Prostate gland (tissue), 2 donors: ENCODE measurements at regions of chr2 and their contacts with region 1.

Region 1: GRCh38 chr2:1591978-1592907 is 152.1 kb downstream of the PXDN start:
- DNase-seq: peak; percentile 82
- H3K4me3 ChIP-seq: no peak overlapping the region
- H3K27ac ChIP-seq: no peak overlapping the region
- H3K4me1 ChIP-seq: peaks cover 2% of the 10 kb centered on the region
- H3K27me3 ChIP-seq: no peaks in the 10 kb centered on the region
- CTCF ChIP-seq: peak; percentile 54 to 91 (median 74)
- POLR2A ChIP-seq: no peak

Region 2: DNA sequence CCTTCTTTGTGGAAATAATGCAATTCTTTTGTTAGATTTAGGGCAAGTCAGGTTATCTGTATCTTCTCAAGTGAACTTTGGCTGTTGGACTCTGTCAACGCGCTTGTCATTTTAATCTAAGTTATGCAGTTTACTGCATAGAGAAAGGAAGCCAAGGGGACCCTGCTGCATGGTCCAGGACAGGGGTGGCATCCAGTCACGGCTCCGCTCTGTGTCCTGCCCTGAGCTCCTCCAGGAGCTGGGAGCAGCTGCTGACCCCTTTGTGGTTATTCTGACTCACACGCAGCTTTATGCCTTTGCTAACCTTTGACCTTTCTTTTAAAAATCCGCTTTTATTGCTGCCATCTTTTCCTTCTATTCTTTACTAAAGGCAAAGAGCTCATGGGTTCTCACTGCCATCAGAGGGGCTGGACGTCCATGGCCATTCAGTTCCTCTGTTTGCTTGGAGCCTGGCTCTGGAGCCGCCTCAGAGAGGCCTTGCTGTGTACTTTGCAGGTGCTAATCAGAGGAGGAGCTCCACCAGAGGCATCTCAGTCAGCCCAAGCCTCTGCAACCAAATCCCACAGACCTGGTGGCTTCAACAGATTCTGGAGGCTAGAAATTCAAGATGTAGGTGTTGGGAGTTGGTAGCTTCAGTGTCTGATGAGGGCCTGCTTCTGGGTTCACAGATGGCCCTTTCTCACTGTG is 602.3 kb before region 1 on chr2:
- intact Hi-C with region 1: no loop called
- DNase-seq: no peak
- H3K4me3 ChIP-seq: no peak overlapping the region
- H3K27ac ChIP-seq: no peak overlapping the region
- H3K4me1 ChIP-seq: no peaks in the 10 kb centered on the region
- H3K27me3 ChIP-seq: no peaks in the 10 kb centered on the region
- CTCF ChIP-seq: no peak
- POLR2A ChIP-seq: no peak

Region 3: GRCh38 chr2:1353124-1353523 is 239.1 kb before region 1 on chr2:
- intact Hi-C with region 1: no loop called
- DNase-seq: no peak
- H3K4me3 ChIP-seq: no peak overlapping the region
- H3K27ac ChIP-seq: no peak overlapping the region
- H3K4me1 ChIP-seq: no peaks in the 10 kb centered on the region
- H3K27me3 ChIP-seq: no peaks in the 10 kb centered on the region
- CTCF ChIP-seq: no peak
- POLR2A ChIP-seq: no peak

Region 4: GRCh38 chr2:1628893-1629292 is 36.6 kb after region 1 on chr2:
- intact Hi-C with region 1: no loop called
- DNase-seq: peak; percentile 86
- H3K4me3 ChIP-seq: no peak overlapping the region
- H3K27ac ChIP-seq: peak overlapping the region; percentile 36 to 50
- H3K4me1 ChIP-seq: peaks cover 21% of the 10 kb centered on the region
- H3K27me3 ChIP-seq: no peaks in the 10 kb centered on the region
- CTCF ChIP-seq: no peak
- POLR2A ChIP-seq: no peak

Region 5: DNA sequence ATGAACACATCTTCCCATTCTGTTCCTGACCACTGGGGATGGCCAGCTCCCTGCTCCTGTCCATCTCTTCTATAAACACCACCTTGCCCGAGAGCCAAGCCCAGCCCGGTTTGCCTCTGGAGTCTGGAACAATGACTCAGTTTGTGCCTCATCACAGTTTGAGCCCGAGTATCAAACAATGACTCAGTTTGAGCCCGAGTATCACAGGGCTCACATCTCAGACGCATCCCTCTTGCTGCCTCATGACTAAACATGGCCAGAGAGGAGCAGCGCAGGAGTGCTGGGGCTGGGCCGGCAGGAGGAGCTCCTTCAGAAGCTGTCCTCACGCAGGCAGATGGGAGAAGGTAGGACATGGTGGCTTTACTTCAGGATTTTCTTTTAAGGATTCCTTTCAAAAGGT is 83.4 kb after region 1 on chr2:
- intact Hi-C with region 1: loop called (anchors 1 kb)
- DNase-seq: peak; percentile 74
- H3K4me3 ChIP-seq: no peak overlapping the region
- H3K27ac ChIP-seq: peak overlapping the region; percentile 79 to 80
- H3K4me1 ChIP-seq: no peaks in the 10 kb centered on the region
- H3K27me3 ChIP-seq: no peaks in the 10 kb centered on the region
- CTCF ChIP-seq: peak in 1 of 4 experiments; percentile 42
- POLR2A ChIP-seq: no peak

Region 6: DNA sequence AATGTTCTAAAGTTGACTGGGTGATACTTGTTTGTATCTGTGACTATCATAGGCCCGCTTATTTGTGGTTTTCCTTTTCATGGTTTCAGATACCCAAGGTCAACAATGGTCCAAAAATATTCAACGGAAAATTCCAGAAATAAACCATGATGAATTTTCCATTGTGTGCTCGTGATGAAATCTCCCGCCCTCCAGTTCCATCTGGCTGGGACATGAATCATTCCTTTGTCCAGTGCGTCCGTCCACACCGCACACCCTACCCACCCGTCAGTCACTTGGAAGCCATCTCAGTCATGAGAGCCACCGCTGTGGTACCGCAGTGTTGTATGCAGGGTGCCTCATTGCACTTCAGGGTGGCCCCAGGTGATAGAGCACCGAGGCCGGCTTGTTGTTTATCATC is 420.3 kb after region 1 on chr2:
- intact Hi-C with region 1: no loop called
- DNase-seq: no peak
- H3K4me3 ChIP-seq: no peak overlapping the region
- H3K27ac ChIP-seq: no peak overlapping the region
- H3K4me1 ChIP-seq: no peaks in the 10 kb centered on the region
- H3K27me3 ChIP-seq: no peaks in the 10 kb centered on the region
- CTCF ChIP-seq: no peak
- POLR2A ChIP-seq: no peak